ENCODE measurements at regions of chr10 and their contacts with region 1.

Region 1: GRCh38 chr10:103678178-103678526 is 177.2 kb downstream of the SH3PXD2A start:
- DNase-seq: peak; percentile 86
- H3K4me3 Mint-ChIP-seq: peak overlapping the region; percentile 81
- H3K27ac Mint-ChIP-seq: peak overlapping the region; percentile 82
- H3K4me1 Mint-ChIP-seq: peaks cover 21% of the 10 kb centered on the region
- H3K27me3 Mint-ChIP-seq: no peaks in the 10 kb centered on the region

Region 2: DNA sequence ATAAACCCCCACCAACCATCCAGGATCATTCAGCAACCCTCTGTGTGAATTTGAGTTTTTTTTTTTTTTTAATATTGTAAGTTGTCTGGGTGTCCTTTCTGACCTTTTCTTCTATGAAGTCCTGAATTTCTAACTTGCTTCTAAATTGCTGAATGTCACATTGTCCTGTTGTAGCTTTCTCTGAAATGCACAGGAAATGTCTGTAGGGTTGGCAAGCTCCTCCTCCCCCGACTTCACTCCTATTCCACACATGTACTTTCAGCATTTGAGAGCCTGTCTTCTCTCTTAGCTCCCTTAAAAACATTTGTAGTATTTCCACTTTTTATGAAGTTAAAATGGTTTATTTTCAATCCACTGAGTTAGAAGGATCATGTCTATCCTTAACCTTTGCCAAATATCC is 763.4 kb before region 1 on chr10:
- intact Hi-C with region 1: no loop called
- DNase-seq: no peak
- H3K4me3 Mint-ChIP-seq: peak overlapping the region; percentile 37
- H3K27ac Mint-ChIP-seq: peak overlapping the region; percentile 29
- H3K4me1 Mint-ChIP-seq: peaks cover 32% of the 10 kb centered on the region
- H3K27me3 Mint-ChIP-seq: peaks cover 7% of the 10 kb centered on the region

Region 3: GRCh38 chr10:103659674-103660363 is 18.3 kb before region 1 on chr10:
- intact Hi-C with region 1: loop called (anchors 1 kb)
- DNase-seq: peak; percentile 66
- H3K4me3 Mint-ChIP-seq: peak overlapping the region; percentile 89
- H3K27ac Mint-ChIP-seq: peak overlapping the region; percentile 83
- H3K4me1 Mint-ChIP-seq: peaks cover 8% of the 10 kb centered on the region
- H3K27me3 Mint-ChIP-seq: no peaks in the 10 kb centered on the region

Measured in activated T-helper 1 cell treated with anti-CD3 and anti-CD28 coated beads, Interleukin-12 subunit alpha, Interleukin-12 subunit beta, Interleukin-2, Interleukin-4 antibody, amounts not matched to agents 30 ng/mL and 10 ng/mL and 1 ng/mL, durations not matched to agents 14 hours and 24 hours and 36 hours (primary cell).